Activated CD4-positive, alpha-beta memory T cell treated with anti-CD3 and anti-CD28 coated beads, Interleukin-2, amount 10 ng/mL, durations not matched to agents 7 days and 5 days (primary cell): ENCODE measurements at regions of chr22 and their contacts with region 1.

Region 1: DNA sequence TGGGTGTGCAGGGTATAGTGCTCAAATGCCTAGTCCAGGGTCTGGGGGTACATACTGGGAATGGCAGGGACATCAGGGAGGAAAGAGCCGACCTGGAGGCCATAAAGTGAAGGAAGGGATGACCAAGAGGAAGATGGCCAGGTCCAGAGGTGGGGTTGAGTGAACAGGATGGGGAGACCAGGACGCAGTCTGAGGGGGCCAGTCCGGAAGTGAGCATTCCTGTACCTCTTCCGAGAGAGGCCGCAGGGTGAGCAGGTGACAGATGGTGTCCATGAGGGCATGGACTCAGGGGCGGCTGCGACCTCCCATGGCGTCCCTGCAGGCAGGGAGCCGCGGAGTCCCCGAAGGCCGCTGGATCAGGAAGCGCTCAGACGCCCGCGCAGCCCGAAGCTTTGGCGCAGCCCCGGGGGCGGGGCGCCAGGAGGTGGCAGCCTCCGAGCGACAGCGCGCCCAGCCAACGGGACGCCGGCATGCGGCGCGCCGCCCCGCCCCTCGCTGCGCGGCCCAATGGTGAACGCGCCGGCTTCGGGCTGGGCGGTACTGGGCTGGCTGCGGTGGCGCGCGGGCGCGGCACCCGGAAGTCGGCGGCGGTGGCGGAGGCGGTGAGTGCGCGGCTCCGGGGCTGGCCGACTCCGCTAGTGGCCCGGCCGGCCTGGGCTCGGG is at the start of gene TANGO2:
- DNase-seq: peak; percentile 94
- H3K4me3 Mint-ChIP-seq: peak within 1 kb of the TSS; percentile 91
- H3K27ac Mint-ChIP-seq: peak within 1 kb of the TSS; percentile 86
- H3K4me1 Mint-ChIP-seq: peaks cover 32% of the 10 kb centered on the region
- H3K27me3 Mint-ChIP-seq: peaks cover 17% of the 10 kb centered on the region
- total RNA-seq, gene TANGO2: 39.1 to 44.5 TPM

Region 2: DNA sequence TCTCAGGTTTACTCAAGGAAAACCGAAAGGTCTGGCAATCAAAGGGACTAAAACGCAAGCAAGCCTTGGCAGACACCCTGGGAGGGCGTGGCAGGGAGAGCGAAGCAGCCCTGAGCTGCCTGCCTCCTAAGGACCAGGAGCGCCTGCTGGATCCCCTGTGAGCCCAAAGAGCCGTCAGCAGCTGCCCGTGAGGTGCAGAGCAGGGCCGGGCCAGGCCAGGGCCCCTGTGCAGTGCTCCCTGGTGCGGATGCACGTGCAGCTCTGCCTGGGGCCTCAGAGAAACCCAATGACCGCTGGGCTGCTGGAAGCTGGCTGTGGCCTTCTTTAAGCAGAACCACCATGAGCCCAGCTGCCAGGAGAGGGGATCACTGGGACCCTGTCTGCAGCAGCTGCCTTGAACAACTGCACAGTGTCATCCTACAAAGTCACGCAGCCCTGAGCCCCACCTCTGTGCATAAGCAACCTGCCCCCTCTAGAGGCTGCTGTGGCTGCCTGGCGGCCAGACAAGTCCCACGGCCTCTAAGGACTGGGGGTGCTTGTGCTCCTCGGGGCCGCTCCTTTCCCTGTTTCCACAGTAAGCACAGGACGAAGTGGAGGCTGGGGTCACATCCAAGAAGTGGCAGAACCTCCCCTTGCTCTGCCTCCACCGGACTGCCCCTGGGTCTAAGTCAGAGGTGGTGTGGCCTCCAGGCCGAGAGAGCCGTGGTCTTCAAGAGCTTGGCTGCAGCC is 108.2 kb before region 1 on chr22:
- CTCF ChIA-PET with region 1: no interaction called
- POLR2A ChIA-PET with region 1: no interaction called
- DNase-seq: no peak
- H3K4me3 Mint-ChIP-seq: no peak overlapping the region
- H3K27ac Mint-ChIP-seq: no peak overlapping the region
- H3K4me1 Mint-ChIP-seq: peaks cover 2% of the 10 kb centered on the region
- H3K27me3 Mint-ChIP-seq: no peaks in the 10 kb centered on the region

Region 3: GRCh38 chr22:20031732-20032406 is 11.2 kb after region 1 on chr22:
- CTCF ChIA-PET with region 1: no interaction called
- POLR2A ChIA-PET with region 1: interaction called, 41 read pairs
- DNase-seq: peak; percentile 74
- H3K4me3 Mint-ChIP-seq: no peak overlapping the region
- H3K27ac Mint-ChIP-seq: peak overlapping the region; percentile 74
- H3K4me1 Mint-ChIP-seq: peaks cover 51% of the 10 kb centered on the region
- H3K27me3 Mint-ChIP-seq: no peaks in the 10 kb centered on the region

Region 4: DNA sequence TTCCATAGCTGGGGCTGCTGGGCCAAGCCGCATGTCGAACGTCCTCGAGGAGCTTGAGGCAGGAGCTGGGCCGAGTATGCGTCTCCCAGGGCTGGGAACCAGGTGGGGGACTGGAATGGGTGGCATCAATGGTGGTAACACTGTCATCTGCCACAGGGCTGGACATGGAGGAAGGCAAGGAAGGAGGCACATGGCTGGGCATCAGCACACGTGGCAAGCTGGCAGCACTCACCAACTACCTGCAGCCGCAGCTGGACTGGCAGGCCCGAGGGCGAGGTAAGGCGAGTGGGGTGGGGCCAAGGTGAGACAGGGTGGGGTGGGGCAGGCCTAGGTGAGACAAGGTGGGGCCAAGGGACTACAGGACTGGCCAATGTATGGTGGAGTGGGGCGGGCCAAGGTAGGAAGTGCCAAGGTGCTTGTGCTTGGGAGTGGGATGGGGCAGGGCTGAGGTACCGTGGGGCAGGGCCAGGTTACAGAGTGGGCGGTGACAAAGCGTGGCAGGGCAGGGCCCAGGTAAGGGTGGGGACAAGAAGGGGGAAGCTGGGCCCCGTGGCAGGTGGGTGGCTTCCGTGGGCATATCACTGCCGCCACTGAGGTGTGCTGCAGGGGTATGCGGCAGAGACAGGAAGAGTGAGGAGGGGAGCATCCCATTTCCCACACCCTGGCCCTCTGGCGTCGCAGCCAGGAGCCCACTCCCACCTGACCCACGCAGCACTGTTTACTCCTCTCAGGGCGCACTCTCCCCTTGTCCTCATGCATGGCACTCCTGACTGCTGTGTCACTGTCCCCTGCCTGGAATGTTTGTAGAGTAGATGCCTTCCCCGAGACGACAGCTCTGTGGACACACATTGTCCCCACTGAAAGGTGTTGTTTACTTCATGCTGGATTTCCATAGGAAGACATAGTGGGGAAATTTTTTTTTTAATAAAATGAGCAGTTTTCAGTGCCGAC is 31.9 kb after region 1 on chr22:
- CTCF ChIA-PET with region 1: no interaction called
- POLR2A ChIA-PET with region 1: no interaction called
- DNase-seq: no peak
- H3K4me3 Mint-ChIP-seq: no peak overlapping the region
- H3K27ac Mint-ChIP-seq: no peak overlapping the region
- H3K4me1 Mint-ChIP-seq: no peaks in the 10 kb centered on the region
- H3K27me3 Mint-ChIP-seq: no peaks in the 10 kb centered on the region